Vagina (tissue), 2 donors: ENCODE measurements at regions of chr20 and their contacts with region 1.

Region 1: GRCh38 chr20:51643390-51643789 is 100.9 kb upstream of the NFATC2 start:
- DNase-seq: no peak
- H3K4me3 ChIP-seq: no peak overlapping the region
- H3K27ac ChIP-seq: no peak overlapping the region
- H3K4me1 ChIP-seq: no peaks in the 10 kb centered on the region
- H3K27me3 ChIP-seq: no peaks in the 10 kb centered on the region
- CTCF ChIP-seq: no peak
- POLR2A ChIP-seq: no peak

Region 2: DNA sequence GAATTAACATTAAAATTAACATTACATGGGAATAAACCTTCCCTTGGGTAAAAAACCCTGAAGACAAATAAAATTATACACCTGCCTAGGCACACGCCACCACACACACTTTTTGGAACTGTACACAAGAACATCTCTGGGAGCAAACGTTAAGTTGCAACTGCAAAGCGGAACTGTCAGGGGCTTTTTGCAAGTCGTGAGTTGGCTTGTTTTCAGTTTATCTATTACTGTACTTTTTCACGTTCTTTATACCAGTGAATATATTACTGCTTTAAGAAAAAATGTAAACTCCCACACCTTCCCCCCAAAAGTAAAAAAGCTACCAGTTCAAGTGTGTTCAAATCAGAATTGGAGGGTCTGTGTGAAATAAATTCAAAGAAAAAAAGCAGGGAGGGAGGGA is 35.3 kb before region 1 on chr20:
- intact Hi-C with region 1: no loop called
- DNase-seq: no peak
- H3K4me3 ChIP-seq: no peak overlapping the region
- H3K27ac ChIP-seq: no peak overlapping the region
- H3K4me1 ChIP-seq: no peaks in the 10 kb centered on the region
- H3K27me3 ChIP-seq: no peaks in the 10 kb centered on the region
- CTCF ChIP-seq: no peak
- POLR2A ChIP-seq: no peak

Region 3: DNA sequence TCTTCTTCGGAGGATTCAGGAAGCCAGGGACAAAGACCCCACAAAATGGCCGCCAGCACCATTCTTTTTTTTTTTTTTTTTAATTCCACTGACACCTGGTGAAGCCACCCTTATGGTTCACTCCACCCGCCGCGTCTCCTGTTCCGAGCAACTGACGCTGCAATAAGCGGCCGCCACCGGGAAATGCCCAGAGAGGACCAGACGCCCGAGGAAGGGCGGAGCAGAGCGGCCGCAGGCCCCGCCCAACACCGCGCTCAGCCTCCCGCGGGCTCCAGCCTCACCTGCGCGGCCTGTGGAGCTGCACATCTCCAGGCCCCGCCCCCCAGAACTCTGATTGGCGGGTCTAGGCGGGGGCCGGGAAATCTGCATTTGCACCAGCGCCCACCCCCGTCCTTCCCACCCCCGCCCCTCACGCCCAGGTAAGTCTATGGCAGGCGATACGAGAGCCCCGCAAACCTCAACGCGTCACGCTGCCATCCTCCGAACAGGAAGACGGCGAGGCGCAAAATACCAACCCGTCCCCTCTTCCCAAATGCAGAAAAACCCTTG is 123.7 kb after region 1 on chr20:
- intact Hi-C with region 1: loop called (anchors 10 kb)
- DNase-seq: no peak
- H3K4me3 ChIP-seq: peak overlapping the region; percentile 67 to 73
- H3K27ac ChIP-seq: peak overlapping the region; percentile 66
- H3K4me1 ChIP-seq: peaks cover 13% of the 10 kb centered on the region
- H3K27me3 ChIP-seq: no peaks in the 10 kb centered on the region
- CTCF ChIP-seq: no peak
- POLR2A ChIP-seq: no peak